ENCODE measurements at regions of chr9 and their contacts with region 1.

Region 1: DNA sequence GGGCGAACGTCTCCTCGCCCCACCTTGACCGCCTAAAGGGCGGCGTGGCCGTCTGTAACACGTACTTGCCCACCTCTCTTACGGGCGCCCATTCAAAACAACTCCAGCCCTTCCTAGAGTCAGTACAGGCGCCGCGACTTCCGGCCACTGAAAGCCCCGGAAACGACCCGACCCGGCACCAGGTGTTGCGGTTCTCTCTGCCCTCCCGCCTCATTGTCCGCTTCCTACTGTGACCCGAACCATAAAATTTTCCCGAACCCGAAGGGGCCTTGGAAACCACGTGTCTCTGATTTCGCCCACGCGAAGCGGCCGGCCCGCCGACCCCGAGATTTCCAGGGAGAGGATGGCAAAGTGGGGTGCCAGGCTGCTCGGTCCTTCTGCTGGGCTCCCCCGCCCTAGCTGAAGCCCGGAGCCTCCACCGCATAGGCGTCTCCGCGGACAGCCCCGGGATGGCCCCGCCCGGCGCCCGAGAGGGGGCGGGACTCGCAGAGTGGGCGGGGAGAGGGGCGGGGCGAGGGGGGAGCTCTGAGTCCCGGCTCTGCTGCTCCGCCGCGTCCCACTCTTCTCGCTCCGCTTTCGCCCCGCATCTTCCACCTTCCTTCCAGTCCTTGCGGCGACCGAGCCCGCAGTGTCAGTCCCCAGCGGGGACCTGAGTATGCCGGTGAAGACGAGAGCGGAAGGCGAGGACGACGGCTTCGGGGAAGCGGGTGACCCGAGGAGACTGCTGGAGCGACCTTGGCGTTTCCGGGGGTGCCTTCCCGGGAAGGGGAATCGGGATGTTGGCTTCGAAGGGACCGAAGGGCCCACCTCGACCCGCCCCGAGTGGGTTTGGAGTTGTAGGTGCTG is 684 bp upstream of the PTGES2 start:
- DNase-seq: peak; percentile 90
- ATAC-seq: peak; percentile 84
- H3K4me3 Mint-ChIP-seq: peak overlapping the region; percentile 96
- H3K27ac Mint-ChIP-seq: peak overlapping the region; percentile 96
- H3K4me1 Mint-ChIP-seq: peaks cover 29% of the 10 kb centered on the region
- H3K27me3 Mint-ChIP-seq: peaks cover 2% of the 10 kb centered on the region

Region 2: GRCh38 chr9:127224178-127224882 is 903.9 kb before region 1 on chr9:
- CTCF ChIA-PET with region 1: no interaction called
- POLR2A ChIA-PET with region 1: no interaction called
- intact Hi-C with region 1: loop called in 1 of 2 experiments (anchors 5 kb)
- DNase-seq: peak; percentile 93
- ATAC-seq: peak; percentile 79
- H3K4me3 Mint-ChIP-seq: peak overlapping the region; percentile 68
- H3K27ac Mint-ChIP-seq: peak overlapping the region; percentile 16
- H3K4me1 Mint-ChIP-seq: peaks cover 24% of the 10 kb centered on the region
- H3K27me3 Mint-ChIP-seq: peaks cover 15% of the 10 kb centered on the region

Region 3: DNA sequence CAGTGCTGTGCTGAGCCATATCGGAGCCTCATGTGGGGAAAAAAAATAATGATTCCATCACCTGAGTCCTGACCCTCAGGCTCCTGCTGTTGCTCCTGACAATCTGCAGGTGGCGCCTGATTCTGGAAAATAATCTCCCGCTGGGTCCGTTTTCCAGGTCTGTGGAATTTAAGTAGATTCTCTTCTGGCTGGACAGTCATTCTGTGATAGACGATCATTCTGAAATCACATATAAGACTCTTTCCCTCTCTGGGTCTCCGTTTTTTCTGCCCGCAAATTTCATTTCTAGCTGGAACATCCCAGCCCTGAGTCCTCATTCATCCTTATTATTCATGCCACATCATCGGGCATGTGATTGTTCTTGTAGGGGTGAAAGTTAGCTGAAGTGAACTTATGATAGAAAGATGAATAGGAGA is 538.2 kb before region 1 on chr9:
- CTCF ChIA-PET with region 1: no interaction called
- POLR2A ChIA-PET with region 1: no interaction called
- intact Hi-C with region 1: no loop called
- DNase-seq: peak; percentile 58
- ATAC-seq: peak; percentile 63
- H3K4me3 Mint-ChIP-seq: no peak overlapping the region
- H3K27ac Mint-ChIP-seq: no peak overlapping the region
- H3K4me1 Mint-ChIP-seq: no peaks in the 10 kb centered on the region
- H3K27me3 Mint-ChIP-seq: peaks cover 14% of the 10 kb centered on the region

Region 4: GRCh38 chr9:127785023-127785932 is 342.9 kb before region 1 on chr9:
- CTCF ChIA-PET with region 1: no interaction called
- POLR2A ChIA-PET with region 1: no interaction called
- intact Hi-C with region 1: loop called in 1 of 2 experiments (anchors 1 kb)
- DNase-seq: peak; percentile 93
- ATAC-seq: peak; percentile 34
- H3K4me3 Mint-ChIP-seq: peak overlapping the region; percentile 97
- H3K27ac Mint-ChIP-seq: peak overlapping the region; percentile 97
- H3K4me1 Mint-ChIP-seq: peaks cover 74% of the 10 kb centered on the region
- H3K27me3 Mint-ChIP-seq: no peaks in the 10 kb centered on the region

Region 5: DNA sequence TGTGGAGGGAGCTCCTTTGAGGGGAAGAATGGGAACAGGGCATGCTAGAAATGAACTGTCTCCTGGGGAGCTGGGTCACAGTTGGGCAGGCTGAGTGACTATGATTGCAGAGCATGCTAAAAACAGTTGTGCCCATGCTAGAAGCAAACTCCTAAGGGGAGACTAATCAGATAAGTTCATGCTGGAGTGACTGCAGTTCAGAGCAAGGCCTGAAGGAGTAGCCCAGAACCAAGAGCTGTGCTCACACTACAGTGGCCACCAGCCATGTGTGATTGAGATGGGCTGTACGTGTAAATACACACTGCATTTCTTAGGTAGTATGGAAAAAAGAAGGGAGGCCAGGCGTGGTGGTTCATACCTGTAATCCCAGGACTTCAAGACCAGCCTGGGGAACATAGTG is 240.4 kb before region 1 on chr9:
- CTCF ChIA-PET with region 1: no interaction called
- POLR2A ChIA-PET with region 1: no interaction called
- intact Hi-C with region 1: no loop called
- DNase-seq: no peak
- ATAC-seq: peak; percentile 51
- H3K4me3 Mint-ChIP-seq: no peak overlapping the region
- H3K27ac Mint-ChIP-seq: no peak overlapping the region
- H3K4me1 Mint-ChIP-seq: peaks cover 4% of the 10 kb centered on the region
- H3K27me3 Mint-ChIP-seq: no peaks in the 10 kb centered on the region

Region 6: DNA sequence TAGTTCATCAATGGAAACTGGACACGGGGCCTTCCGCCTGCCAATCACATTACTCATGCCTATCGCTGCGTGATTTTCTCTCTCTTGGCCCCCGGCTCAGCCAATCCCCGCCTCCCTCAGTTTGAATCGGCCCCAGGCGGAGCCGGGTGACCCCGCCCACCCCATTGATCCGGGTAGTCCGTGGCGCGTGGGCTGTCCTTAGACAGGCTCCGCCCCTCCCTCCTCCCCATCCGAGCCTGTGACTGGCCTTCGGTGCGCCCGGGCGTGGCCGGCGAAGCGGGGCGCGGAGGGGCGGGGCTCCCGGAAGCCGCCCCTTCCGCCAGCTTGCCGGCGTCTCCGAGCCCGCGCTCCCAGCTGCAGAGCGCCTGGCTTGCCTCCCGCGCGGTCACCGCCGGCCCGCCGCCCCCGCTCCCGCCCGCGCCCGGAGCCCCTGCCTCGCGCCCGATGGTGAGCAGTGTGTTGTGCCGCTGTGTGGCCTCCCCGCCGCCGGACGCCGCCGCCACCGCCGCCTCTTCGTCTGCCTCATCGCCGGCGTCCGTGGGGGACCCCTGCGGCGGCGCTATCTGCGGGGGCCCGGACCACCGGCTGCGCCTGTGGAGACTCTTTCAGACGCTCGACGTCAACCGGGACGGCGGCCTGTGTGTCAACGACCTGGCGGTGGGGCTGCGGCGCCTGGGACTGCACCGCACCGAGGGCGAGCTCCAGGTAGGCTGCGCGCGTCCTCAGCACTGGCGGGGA is 60.2 kb before region 1 on chr9 and contains the start of gene SLC25A25:
- CTCF ChIA-PET with region 1: interaction called, 5 read pairs
- POLR2A ChIA-PET with region 1: no interaction called
- intact Hi-C with region 1: loop called (anchors 1 to 5 kb)
- DNase-seq: peak; percentile 100
- ATAC-seq: peak; percentile 84
- H3K4me3 Mint-ChIP-seq: no peak within 1 kb of the TSS
- H3K27ac Mint-ChIP-seq: peak within 1 kb of the TSS; percentile 90
- H3K4me1 Mint-ChIP-seq: peaks cover 53% of the 10 kb centered on the region
- H3K27me3 Mint-ChIP-seq: no peaks in the 10 kb centered on the region
- total RNA-seq, gene SLC25A25: 6.9 to 10.8 TPM

Region 7: DNA sequence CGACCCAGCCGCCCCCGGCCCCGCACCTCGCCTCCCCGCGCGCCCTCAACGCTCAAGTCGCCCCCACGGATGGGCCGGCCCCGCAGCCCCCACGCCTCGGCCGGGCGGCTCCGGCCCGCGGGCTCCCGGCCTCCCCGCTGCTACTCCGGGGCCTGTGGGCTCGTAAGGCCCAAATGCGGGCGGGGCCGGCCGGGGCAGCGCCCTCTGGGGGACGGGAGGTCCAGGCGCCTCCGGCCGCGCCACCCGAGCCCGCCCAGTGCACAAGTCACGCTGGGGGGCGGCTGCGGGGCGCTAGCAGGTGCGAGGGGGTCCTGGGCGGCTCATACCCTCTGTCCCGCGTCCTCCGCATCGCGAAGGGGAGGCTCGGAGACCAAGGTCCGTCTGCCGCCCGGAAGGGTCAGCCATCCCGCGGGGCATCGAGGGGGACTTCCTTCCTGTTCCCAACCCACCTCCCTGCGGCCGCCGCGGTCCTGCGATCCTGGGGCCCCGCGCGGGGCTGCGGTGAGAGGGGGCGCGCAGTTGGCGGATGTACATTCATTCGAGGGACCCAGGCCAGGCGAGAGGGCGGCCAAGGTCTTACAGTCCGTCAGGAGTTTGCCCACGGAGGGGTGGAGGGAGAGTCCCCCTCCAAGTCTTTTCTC is 63.3 kb after region 1 on chr9 and contains the start of gene CIZ1:
- CTCF ChIA-PET with region 1: no interaction called
- POLR2A ChIA-PET with region 1: no interaction called
- intact Hi-C with region 1: loop called in 1 of 2 experiments (anchors 2 kb)
- DNase-seq: peak; percentile 84
- ATAC-seq: peak; percentile 82
- H3K4me3 Mint-ChIP-seq: peak within 1 kb of the TSS; percentile 87
- H3K27ac Mint-ChIP-seq: peak within 1 kb of the TSS; percentile 85
- H3K4me1 Mint-ChIP-seq: peaks cover 28% of the 10 kb centered on the region
- H3K27me3 Mint-ChIP-seq: no peaks in the 10 kb centered on the region
- total RNA-seq, gene CIZ1: 79.5 to 110 TPM

Region 8: GRCh38 chr9:128275996-128276573 is 147.9 kb after region 1 on chr9 and contains the starts of genes GOLGA2 and SWI5:
- CTCF ChIA-PET with region 1: no interaction called
- POLR2A ChIA-PET with region 1: no interaction called
- intact Hi-C with region 1: loop called in 1 of 2 experiments (anchors 1 kb)
- DNase-seq: peak; percentile 100
- ATAC-seq: peak; percentile 99
- H3K4me3 Mint-ChIP-seq: peak within 1 kb of the TSS; percentile 97
- H3K27ac Mint-ChIP-seq: peak within 1 kb of the TSS; percentile 95
- H3K4me1 Mint-ChIP-seq: peaks cover 31% of the 10 kb centered on the region
- H3K27me3 Mint-ChIP-seq: no peaks in the 10 kb centered on the region
- total RNA-seq, gene GOLGA2: 28.4 to 29.4 TPM
- total RNA-seq, gene SWI5: 13.1 to 14.1 TPM

Region 9: DNA sequence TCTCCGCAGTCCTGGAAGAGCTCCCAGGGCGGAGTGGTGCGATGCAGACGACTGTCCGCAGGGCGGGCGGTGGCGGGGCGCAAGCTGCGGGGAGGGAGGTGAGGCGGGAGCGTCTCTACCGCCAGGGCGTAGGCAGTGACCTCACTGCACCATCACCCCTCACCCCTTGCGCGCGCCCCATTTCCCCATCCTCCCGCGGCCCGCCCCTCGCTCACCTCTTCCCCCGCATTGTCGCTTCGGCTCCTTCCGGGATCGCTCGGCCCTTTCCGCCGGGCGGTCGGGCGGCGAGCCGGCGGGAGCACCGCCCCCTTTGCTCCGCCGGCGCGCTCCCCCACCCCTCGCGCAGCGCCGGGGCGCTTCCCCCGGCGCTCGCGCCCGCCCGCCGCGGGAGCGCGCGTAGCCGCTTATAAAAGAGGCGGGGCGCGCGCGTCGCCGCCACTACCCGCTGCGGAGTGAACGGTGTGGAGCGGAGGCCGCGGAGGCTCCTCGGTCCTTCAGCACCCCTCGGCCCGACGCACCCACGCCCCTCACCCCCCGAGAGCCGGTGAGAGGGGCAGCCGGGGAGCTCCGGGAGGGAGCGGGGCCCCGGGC is 424.0 kb after region 1 on chr9 and contains the start of gene SPTAN1:
- CTCF ChIA-PET with region 1: no interaction called
- POLR2A ChIA-PET with region 1: no interaction called
- intact Hi-C with region 1: loop called in 1 of 2 experiments (anchors 2 kb)
- DNase-seq: peak; percentile 98
- ATAC-seq: peak; percentile 78
- H3K4me3 Mint-ChIP-seq: no peak within 1 kb of the TSS
- H3K27ac Mint-ChIP-seq: peak within 1 kb of the TSS; percentile 97
- H3K4me1 Mint-ChIP-seq: peaks cover 34% of the 10 kb centered on the region
- H3K27me3 Mint-ChIP-seq: no peaks in the 10 kb centered on the region
- total RNA-seq, gene SPTAN1: 192 to 269 TPM